Calu3 (cell line): ENCODE measurements at regions of chr6 and their contacts with region 1.

Region 1: GRCh38 chr6:83615025-83615999 is 93.6 kb downstream of the SNAP91 start:
- DNase-seq: peak; percentile 13
- H3K4me3 Mint-ChIP-seq: no peak overlapping the region
- H3K27ac Mint-ChIP-seq: no peak overlapping the region
- H3K4me1 Mint-ChIP-seq: no peaks in the 10 kb centered on the region
- H3K27me3 Mint-ChIP-seq: no peaks in the 10 kb centered on the region
- CTCF ChIP-seq: peak; percentile 55

Region 2: DNA sequence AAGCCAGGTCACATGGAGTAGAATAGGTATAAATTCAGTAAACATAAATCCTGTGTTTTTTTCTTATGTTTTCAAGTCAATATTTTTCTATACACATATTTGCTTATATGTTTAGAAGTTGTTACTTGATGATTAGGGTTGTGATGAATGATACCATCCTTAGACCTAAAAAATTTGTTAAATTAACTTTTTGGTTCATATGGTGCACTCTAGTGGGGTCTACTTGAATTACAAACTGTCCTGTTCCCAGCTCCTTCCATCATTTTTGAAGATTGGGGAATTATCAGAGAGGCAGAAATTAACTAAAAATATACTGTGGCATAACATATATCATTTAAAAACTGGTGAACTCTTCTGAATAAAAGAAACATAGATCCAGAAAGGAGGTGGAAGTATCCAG is 189.6 kb after region 1 on chr6:
- CTCF ChIA-PET with region 1: no interaction called
- intact Hi-C with region 1: loop called (anchors 5 kb)
- DNase-seq: no peak
- H3K4me3 Mint-ChIP-seq: no peak overlapping the region
- H3K27ac Mint-ChIP-seq: no peak overlapping the region
- H3K4me1 Mint-ChIP-seq: no peaks in the 10 kb centered on the region
- H3K27me3 Mint-ChIP-seq: no peaks in the 10 kb centered on the region
- CTCF ChIP-seq: no peak

Region 3: DNA sequence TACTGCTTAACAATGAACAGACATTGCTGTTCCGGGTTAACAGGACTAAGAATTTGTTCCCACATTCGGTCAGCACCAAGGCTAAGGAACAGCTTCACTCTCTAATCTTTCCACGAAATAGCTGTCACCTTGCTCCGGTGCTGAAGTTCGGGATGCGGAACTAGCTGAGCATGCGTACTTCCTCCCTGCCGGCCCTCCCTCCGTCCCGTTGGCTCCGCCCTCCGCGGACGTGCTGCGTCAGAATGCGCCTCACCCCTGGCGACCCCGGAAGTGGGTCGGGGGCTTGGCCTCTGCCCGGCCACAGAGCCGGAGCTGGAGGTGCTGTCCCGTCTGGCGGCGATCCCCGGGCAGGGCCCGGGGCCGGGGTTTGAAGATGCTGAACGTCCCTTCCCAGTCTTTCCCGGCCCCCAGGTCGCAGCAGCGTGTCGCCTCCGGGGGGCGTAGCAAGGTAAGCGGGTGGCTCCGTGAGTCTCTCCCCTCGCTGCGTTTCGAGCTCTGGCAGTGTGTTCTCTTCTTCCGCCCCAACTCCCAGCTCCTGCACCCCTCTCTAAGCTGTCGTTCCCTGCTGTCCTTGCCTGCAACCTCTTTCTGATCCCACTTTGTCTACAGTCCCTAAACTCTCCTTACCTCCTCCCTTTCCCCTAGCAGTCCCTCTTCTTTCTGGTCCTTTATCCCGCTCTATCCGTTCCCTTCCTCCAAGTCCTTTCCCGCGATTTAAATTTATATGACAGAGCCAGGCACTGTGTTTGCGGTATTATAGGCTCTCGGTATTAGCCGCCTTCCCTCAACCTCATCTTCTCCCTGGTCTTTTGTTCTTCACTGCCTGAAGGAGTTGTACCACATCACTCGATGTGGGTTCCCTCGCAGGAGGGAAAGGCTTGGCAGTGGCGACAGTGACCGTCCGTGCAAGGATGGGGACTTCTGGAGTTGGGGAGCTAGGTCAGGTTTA is 244.4 kb after region 1 on chr6 and contains the start of gene CYB5R4:
- CTCF ChIA-PET with region 1: interaction called, 5 read pairs
- intact Hi-C with region 1: loop called (anchors 5 kb)
- DNase-seq: peak; percentile 96
- H3K4me3 Mint-ChIP-seq: peak within 1 kb of the TSS; percentile 95
- H3K27ac Mint-ChIP-seq: peak within 1 kb of the TSS; percentile 86
- H3K4me1 Mint-ChIP-seq: peaks cover 23% of the 10 kb centered on the region
- H3K27me3 Mint-ChIP-seq: peaks cover 12% of the 10 kb centered on the region
- CTCF ChIP-seq: peak; percentile 40
- total RNA-seq, gene CYB5R4: 23.3 and 28.3 TPM in 2 replicates